ENCODE measurements at regions of chr7 and their contacts with region 1.

Region 1: DNA sequence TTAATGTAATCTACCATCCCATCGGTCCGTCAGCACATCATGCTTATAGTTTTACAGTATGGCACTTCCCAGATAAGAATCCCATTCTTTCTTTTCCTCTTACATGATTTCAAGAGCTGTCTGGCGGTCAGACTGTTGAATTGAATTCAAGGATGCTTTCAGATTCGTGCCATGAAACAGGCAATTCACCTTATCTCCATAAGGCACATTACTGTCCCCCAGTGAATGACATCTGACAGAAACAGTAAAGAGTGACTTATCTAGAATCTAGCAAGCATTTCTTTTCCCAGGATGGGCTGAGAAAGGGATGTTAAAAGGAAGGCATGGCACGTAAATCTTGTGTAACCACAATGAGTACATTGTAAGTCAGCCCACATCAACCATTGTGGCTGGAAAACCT is 61.1 kb upstream of the SEM1 start:
- DNase-seq: no peak
- H3K4me3 ChIP-seq: no peak overlapping the region
- H3K27ac ChIP-seq: no peak overlapping the region
- H3K4me1 ChIP-seq: no peaks in the 10 kb centered on the region
- H3K27me3 ChIP-seq: no peaks in the 10 kb centered on the region
- CTCF ChIP-seq: no peak
- EP300 ChIP-seq: no peak
- POLR2A ChIP-seq: no peak

Region 2: GRCh38 chr7:96614154-96614867 is 156.4 kb before region 1 on chr7:
- in situ Hi-C with region 1: loop called in 1 of 4 experiments (anchors 25 kb)
- intact Hi-C with region 1: no loop called
- DNase-seq: no peak
- H3K4me3 ChIP-seq: no peak overlapping the region
- H3K27ac ChIP-seq: no peak overlapping the region
- H3K4me1 ChIP-seq: no peaks in the 10 kb centered on the region
- H3K27me3 ChIP-seq: no peaks in the 10 kb centered on the region
- CTCF ChIP-seq: no peak
- EP300 ChIP-seq: no peak
- POLR2A ChIP-seq: no peak